ENCODE measurements at regions of chr6 and their contacts with region 1.

Region 1: GRCh38 chr6:44655412-44656342 is 268.2 kb downstream of the CDC5L start:
- DNase-seq: peak; percentile 78
- H3K4me3 ChIP-seq: no peak overlapping the region
- H3K27ac ChIP-seq: no peak overlapping the region
- H3K4me1 ChIP-seq: peaks cover 0 to 16% (median 4%) of the 10 kb centered on the region in 4 donors
- H3K27me3 ChIP-seq: no peaks in the 10 kb centered on the region
- CTCF ChIP-seq: peak; percentile 84 to 96 (median 91)
- EP300 ChIP-seq: peak; percentile 73
- POLR2A ChIP-seq: no peak

Region 2: DNA sequence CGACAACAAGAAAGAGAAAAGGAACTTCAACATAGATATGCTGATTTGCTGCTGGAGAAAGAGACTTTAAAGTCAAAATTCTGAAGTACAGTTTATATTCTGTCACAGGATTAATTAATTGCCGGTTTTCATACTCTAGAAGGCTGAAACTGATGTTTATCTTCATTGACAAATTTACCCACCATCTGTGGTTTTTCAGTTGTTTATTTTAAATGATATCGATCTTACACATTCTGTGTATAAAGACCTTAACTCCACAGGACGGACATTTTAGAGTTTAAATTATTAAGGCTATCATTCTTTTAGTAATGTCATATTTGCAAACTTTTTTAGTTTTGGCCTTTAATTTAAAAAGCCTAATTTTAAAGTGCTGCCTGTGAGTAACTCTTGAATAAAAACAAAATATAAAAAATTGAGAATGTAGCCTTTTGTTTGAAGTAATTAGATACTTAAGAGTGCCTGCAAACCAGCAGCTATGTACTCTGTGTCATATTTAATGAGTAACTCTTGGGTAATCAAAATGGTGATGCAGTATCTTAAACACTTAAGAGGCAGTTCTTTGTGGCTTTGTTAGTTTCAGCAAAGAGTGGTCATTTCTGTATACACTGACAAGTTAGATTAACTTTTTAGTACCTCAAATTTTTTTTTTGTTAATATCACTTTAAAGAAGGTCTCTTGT is 208.9 kb before region 1 on chr6:
- in situ Hi-C with region 1: no loop called
- intact Hi-C with region 1: no loop called
- DNase-seq: no peak
- H3K4me3 ChIP-seq: no peak overlapping the region
- H3K27ac ChIP-seq: no peak overlapping the region
- H3K4me1 ChIP-seq: no peaks in the 10 kb centered on the region
- H3K27me3 ChIP-seq: no peaks in the 10 kb centered on the region
- CTCF ChIP-seq: no peak
- EP300 ChIP-seq: no peak
- POLR2A ChIP-seq: no peak

Region 3: DNA sequence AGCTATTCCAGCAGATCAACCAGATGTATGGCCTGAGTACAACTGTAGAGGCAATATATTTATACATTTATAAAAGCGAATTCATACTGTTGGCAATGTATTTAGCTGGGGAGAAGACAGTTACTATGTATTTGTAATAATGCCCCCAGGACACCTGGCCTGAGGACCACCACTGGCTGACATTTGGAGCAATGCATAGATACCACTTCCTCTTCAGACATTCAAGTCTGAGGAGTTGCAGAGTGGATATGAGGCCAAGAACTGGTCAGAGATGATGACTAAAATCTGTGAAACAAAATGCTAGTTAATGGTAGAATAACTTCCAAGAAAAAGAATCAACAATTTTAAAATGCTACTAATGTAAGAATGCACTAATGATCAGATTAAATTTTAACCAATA is 194.1 kb after region 1 on chr6:
- in situ Hi-C with region 1: no loop called
- intact Hi-C with region 1: no loop called
- DNase-seq: no peak
- H3K4me3 ChIP-seq: no peak overlapping the region
- H3K27ac ChIP-seq: no peak overlapping the region
- H3K4me1 ChIP-seq: no peaks in the 10 kb centered on the region
- H3K27me3 ChIP-seq: no peaks in the 10 kb centered on the region
- CTCF ChIP-seq: no peak
- EP300 ChIP-seq: no peak
- POLR2A ChIP-seq: no peak

Region 4: DNA sequence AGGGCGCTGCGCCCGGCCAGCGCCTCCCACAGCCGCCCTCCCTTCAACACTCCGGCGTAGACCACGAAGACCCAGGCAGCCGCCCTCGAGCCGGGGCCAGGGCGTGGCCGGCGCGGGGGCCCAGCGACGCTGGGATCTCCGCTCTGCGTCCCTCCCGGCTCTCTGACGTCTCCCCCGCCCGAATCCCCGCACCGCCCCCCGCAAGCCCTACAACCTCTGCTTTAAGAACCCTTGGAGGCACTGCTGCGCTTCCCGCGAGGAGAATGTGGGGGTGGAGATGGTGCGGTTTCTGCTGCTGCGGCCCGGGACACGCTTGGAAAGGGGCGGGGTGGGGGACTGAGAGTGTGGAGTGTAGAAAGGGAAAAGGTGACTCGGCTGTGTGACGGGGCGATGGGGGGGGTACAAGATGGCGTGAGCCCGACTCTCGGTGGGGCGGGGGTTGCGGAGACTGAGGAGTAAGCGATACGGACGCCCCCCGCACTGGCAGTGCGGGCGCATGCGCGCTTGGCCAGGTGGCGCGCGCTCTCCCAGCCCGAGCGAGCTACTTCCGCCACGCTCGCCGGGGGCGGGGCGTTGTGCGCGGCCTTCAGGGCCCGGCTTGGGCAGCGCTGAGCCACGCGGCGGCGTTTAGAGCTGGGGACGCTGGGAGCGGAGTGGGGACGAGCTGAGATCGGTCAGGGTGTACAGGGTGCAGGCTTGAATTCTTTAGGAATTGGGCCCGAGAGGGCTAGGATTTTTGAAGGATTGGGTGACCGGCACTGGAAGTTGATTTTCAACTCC is 722.1 kb after region 1 on chr6 and contains the start of gene SUPT3H:
- in situ Hi-C with region 1: no loop called
- intact Hi-C with region 1: loop called (anchors 10 kb)
- DNase-seq: peak; percentile 93
- H3K4me3 ChIP-seq: peak within 1 kb of the TSS; percentile 63 to 87 (median 79)
- H3K27ac ChIP-seq: peak within 1 kb of the TSS; percentile 94 to 97 (median 96)
- H3K4me1 ChIP-seq: peaks cover 4 to 14% (median 10%) of the 10 kb centered on the region in 4 donors
- H3K27me3 ChIP-seq: no peaks in the 10 kb centered on the region
- CTCF ChIP-seq: no peak
- EP300 ChIP-seq: no peak
- POLR2A ChIP-seq: peak; percentile 78
- total RNA-seq, gene SUPT3H: 0.80 to 12.7 (median 3.0) TPM

Region 5: DNA sequence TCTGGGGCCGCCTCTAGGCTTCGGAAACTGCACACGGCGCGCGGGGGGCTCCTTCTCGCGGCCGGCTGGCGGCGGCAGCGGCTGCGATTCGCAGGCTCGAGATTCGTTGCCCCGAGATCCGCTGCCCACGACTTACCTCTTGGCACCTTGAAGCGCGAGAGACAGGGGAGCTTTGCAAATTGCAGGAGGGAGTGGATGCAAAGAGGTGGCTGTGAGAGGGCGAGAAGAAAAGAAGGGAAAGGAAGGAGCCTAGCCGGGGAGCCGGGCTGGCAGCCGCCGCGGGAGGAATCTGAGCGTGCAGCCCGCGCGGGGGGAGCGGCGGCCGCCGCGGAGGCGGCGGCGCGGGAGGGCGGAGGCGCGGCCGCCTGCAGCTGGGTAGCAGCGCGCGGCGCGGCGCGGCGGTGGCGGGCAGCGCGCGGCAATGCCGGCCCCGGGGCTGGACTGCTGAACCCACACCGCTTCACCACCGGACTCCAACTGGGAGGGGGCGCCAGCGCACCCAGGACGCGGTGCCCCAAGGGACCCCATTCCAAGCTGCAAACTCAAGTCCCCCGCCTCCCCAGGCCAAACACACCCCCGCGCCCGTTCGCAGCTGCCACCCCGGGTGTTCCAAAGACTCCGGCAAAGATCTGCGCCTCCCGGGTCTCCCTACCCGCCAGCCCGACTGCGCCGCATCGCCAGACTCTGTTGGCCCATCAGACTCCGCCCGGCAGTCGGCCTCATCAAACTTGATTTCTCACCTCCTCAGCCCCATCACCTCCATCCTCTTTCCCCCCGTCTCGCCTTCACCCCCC is 766.2 kb after region 1 on chr6:
- in situ Hi-C with region 1: loop called in 3 of 4 experiments (anchors 10 to 25 kb)
- intact Hi-C with region 1: no loop called
- DNase-seq: peak; percentile 66
- H3K4me3 ChIP-seq: peak overlapping the region; percentile 29 to 64 (median 43)
- H3K27ac ChIP-seq: peak overlapping the region; percentile 77 to 85 (median 82)
- H3K4me1 ChIP-seq: peaks cover 0 to 44% (median 32%) of the 10 kb centered on the region in 4 donors
- H3K27me3 ChIP-seq: peaks cover 84% of the 10 kb centered on the region
- CTCF ChIP-seq: peak in 1 of 5 experiments; percentile 14
- EP300 ChIP-seq: no peak
- POLR2A ChIP-seq: peak; percentile 24

Region 6: DNA sequence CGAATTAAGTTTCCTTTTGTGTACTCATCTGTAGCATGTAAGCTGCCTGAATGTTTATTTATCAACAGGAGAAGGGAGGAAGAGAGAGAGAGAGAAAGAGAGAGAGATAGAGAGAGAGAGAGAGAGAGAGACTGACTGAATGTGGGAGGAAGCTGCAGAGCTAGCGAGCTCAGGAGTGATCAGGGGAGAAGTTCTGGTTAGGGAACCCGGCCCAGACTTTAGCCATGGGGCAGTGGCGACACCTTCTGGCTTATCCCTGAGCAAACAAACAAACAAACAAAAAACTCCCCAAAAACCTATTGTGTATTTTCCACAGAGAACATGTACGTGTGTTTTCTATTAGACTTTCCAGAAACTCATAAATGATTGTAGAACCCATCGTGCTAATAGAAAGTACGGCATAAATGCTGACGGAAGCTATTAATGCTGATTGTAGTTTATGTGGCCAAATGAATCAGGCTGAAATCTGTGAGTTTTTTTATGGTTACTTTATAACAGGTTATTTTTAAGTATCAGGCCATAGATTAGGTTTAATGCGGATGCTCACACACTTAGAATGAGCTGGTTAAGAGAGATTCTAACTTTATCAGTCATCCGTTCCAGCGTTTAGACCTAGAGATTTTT is 1267.2 kb after region 1 on chr6:
- in situ Hi-C with region 1: loop called in 2 of 4 experiments (anchors 25 kb)
- intact Hi-C with region 1: no loop called
- DNase-seq: peak; percentile 61
- H3K4me3 ChIP-seq: no peak overlapping the region
- H3K27ac ChIP-seq: no peak overlapping the region
- H3K4me1 ChIP-seq: peaks cover 0 to 8% (median 0%) of the 10 kb centered on the region in 4 donors
- H3K27me3 ChIP-seq: no peaks in the 10 kb centered on the region
- CTCF ChIP-seq: peak; percentile 38 to 57 (median 49)
- EP300 ChIP-seq: no peak
- POLR2A ChIP-seq: no peak

Measured in transverse colon (tissue), 4 donors.